ENCODE measurements at regions of chr5 and their contacts with region 1.

Region 1: GRCh38 chr5:39117401-39117800 is 43.2 kb upstream of the RICTOR start:
- DNase-seq: peak; percentile 97
- H3K4me3 ChIP-seq: no peak overlapping the region
- H3K27ac ChIP-seq: peak overlapping the region; percentile 64
- H3K4me1 ChIP-seq: peaks cover 54% of the 10 kb centered on the region
- H3K27me3 ChIP-seq: no peaks in the 10 kb centered on the region
- CTCF ChIP-seq: no peak
- POLR2A ChIP-seq: no peak

Region 2: GRCh38 chr5:39092581-39093350 is 24.6 kb before region 1 on chr5:
- CTCF ChIA-PET with region 1: interaction called, 3 read pairs
- POLR2A ChIA-PET with region 1: no interaction called
- dilution Hi-C with region 1: no loop called
- intact Hi-C with region 1: loop called (anchors 1 kb)
- DNase-seq: peak; percentile 87
- H3K4me3 ChIP-seq: no peak overlapping the region
- H3K27ac ChIP-seq: peak overlapping the region; percentile 79
- H3K4me1 ChIP-seq: peaks cover 17% of the 10 kb centered on the region
- H3K27me3 ChIP-seq: no peaks in the 10 kb centered on the region
- CTCF ChIP-seq: no peak
- POLR2A ChIP-seq: no peak

Region 3: DNA sequence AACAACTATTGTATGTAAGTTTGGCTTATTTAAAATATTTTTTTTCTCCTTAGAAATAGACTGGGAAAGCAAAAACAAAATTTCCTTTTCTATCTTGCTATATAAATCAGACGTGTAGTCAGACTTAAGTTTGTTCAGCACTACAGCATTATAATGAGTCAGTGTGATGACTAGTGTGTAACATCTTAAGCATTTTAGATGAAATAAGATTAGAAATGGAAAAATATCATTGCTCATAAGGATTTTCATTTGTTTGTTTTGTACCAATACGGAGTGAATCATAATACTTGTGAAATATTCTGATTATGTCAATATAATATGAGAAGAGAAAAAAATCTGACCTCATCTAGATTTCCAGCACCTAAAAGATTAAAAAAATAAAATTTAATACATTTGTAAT is 21.5 kb after region 1 on chr5:
- CTCF ChIA-PET with region 1: interaction called, 3 read pairs
- POLR2A ChIA-PET with region 1: no interaction called
- dilution Hi-C with region 1: no loop called
- intact Hi-C with region 1: loop called (anchors 1 kb)
- DNase-seq: peak; percentile 77
- H3K4me3 ChIP-seq: no peak overlapping the region
- H3K27ac ChIP-seq: peak overlapping the region; percentile 85
- H3K4me1 ChIP-seq: peaks cover 30% of the 10 kb centered on the region
- H3K27me3 ChIP-seq: no peaks in the 10 kb centered on the region
- CTCF ChIP-seq: no peak
- POLR2A ChIP-seq: no peak

Measured in endothelial cell of umbilical vein (primary cell).